Dorsolateral prefrontal cortex (tissue), 120 donors: ENCODE measurements at regions of chr6 and their contacts with region 1.

Region 1: DNA sequence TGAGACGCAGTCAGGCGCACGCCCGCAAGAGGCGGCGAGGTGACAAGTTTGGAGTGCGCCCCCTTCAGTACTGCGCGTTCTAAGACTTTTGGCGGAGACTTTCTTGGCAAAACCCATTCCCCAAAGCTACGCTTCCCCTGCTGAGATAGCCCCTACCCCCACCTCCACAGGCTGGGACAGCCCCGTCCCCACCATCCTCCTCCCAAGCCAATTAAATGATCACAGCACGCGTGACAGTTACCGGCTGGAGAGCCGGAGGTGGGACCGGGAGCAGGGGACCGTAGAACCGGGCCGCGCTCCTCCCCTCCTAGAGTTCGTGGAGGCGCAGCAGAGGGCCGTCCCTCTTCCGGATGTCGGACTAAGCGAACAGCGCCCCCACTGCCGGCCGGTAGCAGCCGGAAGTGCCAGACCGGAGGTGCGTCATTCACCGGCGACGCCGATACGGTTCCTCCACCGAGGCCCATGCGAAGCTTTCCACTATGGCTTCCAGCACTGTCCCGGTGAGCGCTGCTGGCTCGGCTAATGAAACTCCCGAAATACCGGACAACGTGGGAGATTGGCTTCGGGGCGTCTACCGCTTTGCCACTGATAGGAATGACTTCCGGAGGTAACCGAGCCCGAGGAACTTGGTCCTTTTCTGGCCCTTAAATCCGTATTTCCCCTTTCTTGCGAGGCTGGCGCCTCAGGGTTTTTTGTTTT is at the start of gene TOMM6:
- DNase-seq: peak; percentile 90 to 96 (median 94)
- H3K4me3 ChIP-seq: peak within 1 kb of the TSS; percentile 70 to 100 (median 94)
- H3K27ac ChIP-seq: peak within 1 kb of the TSS; percentile 75 to 99 (median 93)
- H3K27me3 ChIP-seq: no peaks in the 10 kb centered on the region
- CTCF ChIP-seq: peak; percentile 80 to 99 (median 92)
- total RNA-seq, gene TOMM6: 67.4 to 141 (median 99.4) TPM

Region 2: GRCh38 chr6:41846666-41847237 is 59.4 kb after region 1 on chr6:
- intact Hi-C with region 1: no loop called
- DNase-seq: peak in 1 of 10 donors; percentile 24
- H3K4me3 ChIP-seq: no peak overlapping the region
- H3K27ac ChIP-seq: peak overlapping the region in 7 of 59 donors; percentile 26 to 59 (median 39)
- H3K27me3 ChIP-seq: no peaks in the 10 kb centered on the region
- CTCF ChIP-seq: peak in 55 of 56 donors; percentile 23 to 82 (median 68)

Region 3: DNA sequence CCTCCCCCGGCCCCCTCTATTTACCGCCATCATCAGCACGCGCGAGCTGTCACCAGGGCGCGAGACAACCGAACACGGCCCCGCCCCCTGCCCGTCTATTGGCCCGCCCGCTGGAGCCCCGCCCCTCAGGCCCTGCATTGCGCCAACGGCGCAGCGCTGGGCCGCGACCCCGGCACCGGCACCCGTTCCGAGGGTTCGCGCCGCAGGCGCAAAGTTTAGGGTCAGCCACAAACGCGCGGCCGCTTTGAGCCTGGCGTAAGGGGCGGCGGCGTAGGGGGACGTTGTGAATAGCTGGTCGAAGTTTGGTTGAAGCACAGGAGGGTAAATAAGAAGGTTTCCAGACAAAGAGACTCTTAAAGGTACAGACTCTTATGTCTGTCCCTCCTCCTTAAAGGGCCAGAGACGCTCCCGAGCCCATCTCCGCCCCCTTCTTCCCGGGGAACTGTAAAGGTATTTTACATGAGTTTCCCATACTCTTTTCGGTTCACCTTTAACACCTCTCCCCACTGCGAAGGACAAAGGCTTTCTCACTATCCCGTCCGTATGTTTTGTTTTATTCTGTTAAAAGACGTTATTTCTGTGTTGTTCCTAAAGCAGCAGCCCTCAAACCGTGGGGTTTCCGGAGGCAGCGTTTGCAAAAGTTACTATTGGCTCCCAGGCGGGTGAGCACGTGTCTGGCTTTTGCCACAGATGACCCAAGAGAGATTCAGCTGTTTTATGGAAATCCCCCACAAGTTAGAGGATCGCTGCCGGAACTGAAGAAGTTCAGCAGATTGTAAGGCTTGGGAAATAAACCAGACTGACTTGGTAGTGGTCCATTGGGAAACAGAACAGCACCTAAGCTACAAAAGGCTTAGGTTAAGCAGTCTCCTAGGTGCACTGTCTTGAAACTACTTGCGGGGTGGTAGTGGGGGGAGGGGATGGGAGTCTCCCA is 108.2 kb after region 1 on chr6 and contains the start of gene USP49:
- intact Hi-C with region 1: loop called in 1 of 2 experiments (anchors 10 kb)
- DNase-seq: peak; percentile 79 to 92 (median 88)
- H3K4me3 ChIP-seq: peak within 1 kb of the TSS; percentile 57 to 96 (median 83)
- H3K27ac ChIP-seq: peak within 1 kb of the TSS in 54 of 59 donors; percentile 36 to 93 (median 76)
- H3K27me3 ChIP-seq: no peaks in the 10 kb centered on the region
- CTCF ChIP-seq: peak in 8 of 56 donors; percentile 12 to 38 (median 20)
- total RNA-seq, gene USP49: 7.2 to 16.4 (median 11.2) TPM

Region 4: GRCh38 chr6:41920921-41921711 is 133.7 kb after region 1 on chr6 and contains the starts of genes BYSL and MED20:
- intact Hi-C with region 1: loop called (anchors 1 to 2 kb)
- DNase-seq: peak; percentile 92 to 97 (median 96)
- H3K4me3 ChIP-seq: peak within 1 kb of the TSS; percentile 68 to 100 (median 91)
- H3K27ac ChIP-seq: peak within 1 kb of the TSS; percentile 91 to 100 (median 98)
- H3K27me3 ChIP-seq: no peaks in the 10 kb centered on the region
- CTCF ChIP-seq: peak; percentile 93 to 100 (median 99)
- total RNA-seq, gene BYSL: 6.6 to 16.7 (median 10.7) TPM
- total RNA-seq, gene MED20: 7.2 to 21.0 (median 14.8) TPM

Region 5: DNA sequence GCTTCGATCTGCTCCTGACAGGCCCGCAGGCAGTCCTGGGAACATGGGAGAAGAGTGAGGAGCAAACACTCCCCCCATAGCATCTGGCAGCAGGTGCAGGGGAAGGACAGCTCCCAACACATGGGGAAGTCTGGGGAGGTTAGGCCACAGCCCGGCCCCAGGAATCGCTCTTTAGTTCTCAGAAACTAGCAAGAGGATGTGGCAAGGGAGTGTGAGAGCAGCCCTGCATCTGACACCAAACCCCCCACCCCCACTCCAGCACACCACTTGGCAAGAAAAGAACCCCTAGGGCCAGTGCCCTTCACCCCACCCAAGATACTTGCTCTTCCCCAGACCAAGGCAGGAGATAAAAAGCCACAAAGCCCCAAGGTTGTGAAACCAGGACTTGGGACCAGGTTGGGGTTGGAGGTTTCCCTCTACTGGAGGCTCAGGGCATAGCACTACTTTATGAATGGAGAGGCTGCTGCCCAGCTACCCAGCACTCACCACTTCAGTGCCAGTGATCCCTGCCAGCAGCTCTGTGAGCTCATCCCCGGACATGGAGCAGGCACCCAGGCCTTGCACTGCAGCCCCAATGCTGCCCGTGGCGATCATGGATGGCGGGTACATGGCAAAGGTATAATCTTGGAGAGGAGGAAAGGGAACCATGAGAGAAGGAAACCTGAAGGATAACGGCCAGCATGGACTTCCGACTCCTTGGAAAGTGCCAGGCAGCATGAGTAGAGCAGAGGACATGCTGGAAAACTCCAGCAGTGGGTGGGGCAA is 148.9 kb after region 1 on chr6:
- intact Hi-C with region 1: loop called (anchors 5 kb)
- DNase-seq: peak; percentile 57 to 85 (median 81)
- H3K4me3 ChIP-seq: peak overlapping the region in 10 of 59 donors; percentile 2 to 34 (median 16)
- H3K27ac ChIP-seq: peak overlapping the region in 50 of 59 donors; percentile 3 to 92 (median 63)
- H3K27me3 ChIP-seq: no peaks in the 10 kb centered on the region
- CTCF ChIP-seq: peak; percentile 55 to 89 (median 80)

Region 6: GRCh38 chr6:41941280-41942066 is 154.1 kb after region 1 on chr6 and contains the start of gene CCND3:
- intact Hi-C with region 1: loop called (anchors 5 kb)
- DNase-seq: peak; percentile 77 to 96 (median 91)
- H3K4me3 ChIP-seq: peak within 1 kb of the TSS; percentile 66 to 97 (median 88)
- H3K27ac ChIP-seq: peak within 1 kb of the TSS; percentile 27 to 94 (median 84)
- H3K27me3 ChIP-seq: no peaks in the 10 kb centered on the region
- CTCF ChIP-seq: peak in 22 of 56 donors; percentile 1 to 51 (median 19)
- total RNA-seq, gene CCND3: 55.7 to 135 (median 83.5) TPM

Region 7: GRCh38 chr6:42050266-42051032 is 263.1 kb after region 1 on chr6 and contains the start of gene TAF8:
- intact Hi-C with region 1: loop called (anchors 1 kb)
- DNase-seq: peak; percentile 84 to 94 (median 92)
- H3K4me3 ChIP-seq: peak within 1 kb of the TSS; percentile 46 to 95 (median 78)
- H3K27ac ChIP-seq: peak within 1 kb of the TSS; percentile 84 to 100 (median 96)
- H3K27me3 ChIP-seq: no peaks in the 10 kb centered on the region
- CTCF ChIP-seq: peak in 35 of 56 donors; percentile 5 to 64 (median 35)
- total RNA-seq, gene TAF8: 17.7 to 55.8 (median 29.5) TPM